ENCODE measurements at regions of chr20 and their contacts with region 1.

Region 1: GRCh38 chr20:47389867-47390347 is 33.4 kb upstream of the ZMYND8 start:
- DNase-seq: no peak
- ATAC-seq: no peak

Region 2: DNA sequence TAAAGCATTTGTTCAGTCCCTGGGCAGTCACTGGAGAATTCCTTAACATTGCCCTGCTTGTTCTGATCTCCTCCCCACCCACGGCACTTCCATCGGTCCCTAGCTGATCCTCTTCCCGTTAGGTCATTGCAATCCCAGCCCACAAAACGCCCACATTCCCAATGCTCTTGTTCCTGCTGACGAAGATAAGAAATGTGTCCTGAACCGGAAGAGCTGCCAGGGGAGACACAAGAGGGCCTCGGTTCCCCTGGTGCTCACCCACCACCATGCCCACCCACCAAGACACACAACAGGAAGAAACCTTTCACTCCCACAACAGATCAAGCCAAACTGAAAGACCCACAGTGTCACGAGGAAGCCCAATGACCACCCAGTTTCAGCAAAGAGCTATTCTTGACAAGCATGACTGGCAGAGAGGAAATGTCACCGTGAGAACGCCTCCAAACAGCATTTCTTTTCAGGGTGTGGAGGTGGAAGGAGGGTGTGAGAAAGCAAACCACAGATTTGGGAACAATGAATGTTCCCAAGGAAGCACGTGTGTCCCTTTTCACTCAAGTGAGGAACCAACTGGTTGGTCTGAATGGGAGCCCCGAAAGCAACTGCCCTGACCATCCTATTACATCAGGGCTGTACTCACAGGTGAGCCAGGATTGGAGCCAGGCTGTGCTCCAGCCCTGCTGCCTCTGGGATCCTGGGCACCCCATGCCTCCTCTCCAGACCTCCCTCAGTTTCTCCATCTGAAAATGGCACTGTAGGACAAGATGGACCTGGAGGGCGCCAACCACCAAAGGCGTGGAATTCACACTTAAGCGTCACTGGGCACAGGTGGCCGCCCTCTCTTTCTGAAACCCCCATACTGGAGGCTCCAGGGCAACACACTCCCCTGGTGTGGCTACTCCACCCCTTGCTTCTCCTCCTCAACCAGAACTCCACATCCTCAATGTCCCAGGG is 130.9 kb before region 1 on chr20:
- intact Hi-C with region 1: no loop called
- DNase-seq: no peak
- ATAC-seq: no peak

Region 3: GRCh38 chr20:47272893-47273590 is 116.9 kb before region 1 on chr20:
- intact Hi-C with region 1: loop called in 1 of 2 experiments (anchors 2 kb)
- DNase-seq: peak in 1 of 2 donors; percentile 18
- ATAC-seq: peak; percentile 76

Region 4: DNA sequence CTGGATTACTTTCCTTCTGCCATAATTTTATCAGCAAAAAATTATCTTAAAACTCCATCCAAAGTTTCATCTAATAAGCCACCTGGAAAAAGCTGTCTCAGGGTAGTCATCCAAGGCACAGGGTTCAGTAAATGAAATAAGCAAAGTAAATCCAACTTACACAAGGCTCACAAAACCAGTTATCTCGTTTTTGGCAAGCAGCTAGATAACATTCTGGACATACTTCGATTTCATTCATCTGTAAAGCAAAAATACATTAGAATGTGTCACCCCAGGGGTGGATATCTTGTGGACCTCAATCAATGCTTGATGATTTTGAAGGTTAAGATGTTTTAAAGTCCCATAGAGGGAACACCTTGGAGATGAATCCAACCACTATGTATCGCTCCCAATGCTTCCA is 106.5 kb before region 1 on chr20:
- intact Hi-C with region 1: no loop called
- DNase-seq: no peak
- ATAC-seq: no peak

Measured in left colon (tissue), 2 donors.